ENCODE measurements at regions of chr1 and their contacts with region 1.

Region 1: GRCh38 chr1:35210321-35211119 is 17.6 kb upstream of the SFPQ start:
- DNase-seq: peak in 1 of 2 donors; percentile 21
- ATAC-seq: peak in 4 of 8 donors; percentile 39 to 87 (median 61)
- H3K4me3 ChIP-seq: peak overlapping the region in 2 of 10 donors; percentile 17 to 20
- H3K27ac ChIP-seq: peak overlapping the region in 1 of 10 donors; percentile 23
- H3K4me1 ChIP-seq: peaks cover 0 to 19% (median 0%) of the 10 kb centered on the region in 9 donors
- H3K27me3 ChIP-seq: no peaks in the 10 kb centered on the region
- CTCF ChIP-seq: no peak

Region 2: DNA sequence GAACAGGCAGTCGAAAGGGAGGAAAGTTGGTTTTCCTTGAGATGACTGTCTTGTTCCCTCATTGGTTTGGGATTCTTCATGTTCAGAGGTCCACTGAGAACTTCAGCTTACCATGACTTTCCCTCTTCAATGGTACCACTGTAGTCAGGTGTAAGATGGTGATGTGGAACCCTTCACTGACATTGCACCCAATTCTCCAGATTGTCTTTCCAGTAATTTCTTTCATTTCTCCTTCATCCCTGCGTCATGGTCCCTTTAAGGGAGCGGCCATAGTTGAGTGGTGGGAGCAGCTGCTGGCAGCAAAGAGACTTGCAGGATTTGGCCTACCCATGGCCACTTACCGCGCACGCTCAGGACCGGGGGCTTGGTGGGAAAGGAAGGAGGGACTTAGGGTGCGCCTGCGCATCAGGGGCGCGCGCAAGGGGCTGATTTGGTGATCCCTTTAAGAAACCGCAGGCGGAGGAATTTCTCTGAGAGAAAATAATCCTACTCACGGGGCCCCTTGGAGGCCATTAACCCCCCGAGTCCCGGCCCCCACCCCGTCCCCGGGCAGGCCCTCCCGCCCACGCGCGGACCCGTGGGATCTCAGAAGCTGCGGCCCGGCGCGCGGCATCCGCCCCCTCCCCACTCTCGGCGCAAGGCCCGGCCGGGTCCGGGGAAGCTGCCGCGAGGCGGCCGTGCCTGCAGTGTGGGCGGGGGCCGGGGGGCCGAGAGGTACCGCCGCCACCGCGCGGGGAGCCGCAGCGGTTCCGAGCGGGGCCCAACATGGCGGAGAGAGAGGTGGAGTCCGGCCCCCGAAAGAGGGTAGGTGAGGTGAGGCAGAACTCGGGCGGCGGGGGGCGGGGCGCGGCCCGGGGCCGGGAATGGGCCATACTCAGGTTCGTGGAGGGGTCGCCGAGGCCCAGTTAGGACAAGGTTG is 58.0 kb after region 1 on chr1 and contains the start of gene ZMYM4:
- intact Hi-C with region 1: loop called in 2 of 10 experiments (anchors 10 kb)
- DNase-seq: peak; percentile 93 to 96
- ATAC-seq: peak; percentile 98 to 99 (median 98)
- H3K4me3 ChIP-seq: peak within 1 kb of the TSS; percentile 70 to 97 (median 90)
- H3K27ac ChIP-seq: peak within 1 kb of the TSS; percentile 59 to 97 (median 88)
- H3K4me1 ChIP-seq: peaks cover 0 to 45% (median 19%) of the 10 kb centered on the region in 9 donors
- H3K27me3 ChIP-seq: no peaks in the 10 kb centered on the region
- CTCF ChIP-seq: peak in 2 of 9 donors; percentile 16 to 25
- total RNA-seq, gene ZMYM4: 26.1 to 37.7 (median 35.0) TPM